Activated T-helper 2 cell treated with anti-CD3 and anti-CD28 coated beads, Interferon-gamma antibody, Interleukin-2, Interleukin-4, amounts not matched to agents 10 μg/mL and 5 μg/mL and 100 μg/mL, durations not matched to agents 14 hours and 24 hours and 36 hours (primary cell): ENCODE measurements at regions of chr2 and their contacts with region 1.

Region 1: GRCh38 chr2:128623776-128624424 is 305.2 kb upstream of the HS6ST1 start:
- DNase-seq: peak; percentile 33
- H3K4me3 Mint-ChIP-seq: peak overlapping the region; percentile 17
- H3K27ac Mint-ChIP-seq: peak overlapping the region; percentile 19
- H3K4me1 Mint-ChIP-seq: peaks cover 21% of the 10 kb centered on the region
- H3K27me3 Mint-ChIP-seq: peaks cover 53% of the 10 kb centered on the region

Region 2: GRCh38 chr2:128727914-128728313 is 104.0 kb after region 1 on chr2:
- intact Hi-C with region 1: loop called (anchors 5 kb)
- DNase-seq: no peak
- H3K4me3 Mint-ChIP-seq: no peak overlapping the region
- H3K27ac Mint-ChIP-seq: peak overlapping the region; percentile 8
- H3K4me1 Mint-ChIP-seq: peaks cover 25% of the 10 kb centered on the region
- H3K27me3 Mint-ChIP-seq: peaks cover 47% of the 10 kb centered on the region